Activated CD4-positive, alpha-beta T cell treated with anti-CD3 and anti-CD28 coated beads for 36 hours (primary cell): ENCODE measurements at regions of chr4 and their contacts with region 1.

Region 1: GRCh38 chr4:39032218-39033085 is at the start of gene TMEM156:
- DNase-seq: peak; percentile 68
- ATAC-seq: peak; percentile 87
- H3K4me3 Mint-ChIP-seq: peak within 1 kb of the TSS; percentile 77
- H3K27ac Mint-ChIP-seq: peak within 1 kb of the TSS; percentile 88
- H3K4me1 Mint-ChIP-seq: peaks cover 46% of the 10 kb centered on the region
- H3K27me3 Mint-ChIP-seq: no peaks in the 10 kb centered on the region
- total RNA-seq, gene TMEM156: 14.3 to 15.4 TPM

Region 2: GRCh38 chr4:38160487-38161207 is 871.8 kb before region 1 on chr4:
- CTCF ChIA-PET with region 1: no interaction called
- POLR2A ChIA-PET with region 1: no interaction called
- intact Hi-C with region 1: loop called in 1 of 2 experiments (anchors 10 kb)
- DNase-seq: peak; percentile 69
- ATAC-seq: peak; percentile 79
- H3K4me3 Mint-ChIP-seq: no peak overlapping the region
- H3K27ac Mint-ChIP-seq: peak overlapping the region; percentile 73
- H3K4me1 Mint-ChIP-seq: peaks cover 70% of the 10 kb centered on the region
- H3K27me3 Mint-ChIP-seq: no peaks in the 10 kb centered on the region

Region 3: GRCh38 chr4:38889143-38889542 is 143.3 kb before region 1 on chr4:
- CTCF ChIA-PET with region 1: no interaction called
- POLR2A ChIA-PET with region 1: no interaction called
- intact Hi-C with region 1: loop called (anchors 1 kb)
- DNase-seq: no peak
- ATAC-seq: peak; percentile 78
- H3K4me3 Mint-ChIP-seq: peak overlapping the region; percentile 52
- H3K27ac Mint-ChIP-seq: peak overlapping the region; percentile 88
- H3K4me1 Mint-ChIP-seq: peaks cover 18% of the 10 kb centered on the region
- H3K27me3 Mint-ChIP-seq: no peaks in the 10 kb centered on the region

Region 4: GRCh38 chr4:38939165-38939564 is 93.3 kb before region 1 on chr4:
- CTCF ChIA-PET with region 1: interaction called, 3 read pairs
- POLR2A ChIA-PET with region 1: no interaction called
- intact Hi-C with region 1: loop called (anchors 1 to 5 kb)
- DNase-seq: no peak
- ATAC-seq: peak; percentile 94
- H3K4me3 Mint-ChIP-seq: no peak overlapping the region
- H3K27ac Mint-ChIP-seq: peak overlapping the region; percentile 47
- H3K4me1 Mint-ChIP-seq: peaks cover 42% of the 10 kb centered on the region
- H3K27me3 Mint-ChIP-seq: no peaks in the 10 kb centered on the region

Region 5: GRCh38 chr4:38980903-38981676 is 51.4 kb before region 1 on chr4:
- CTCF ChIA-PET with region 1: no interaction called
- POLR2A ChIA-PET with region 1: interaction called, 3 read pairs
- intact Hi-C with region 1: loop called (anchors 1 kb)
- DNase-seq: peak; percentile 30
- ATAC-seq: peak; percentile 81
- H3K4me3 Mint-ChIP-seq: peak overlapping the region; percentile 23
- H3K27ac Mint-ChIP-seq: peak overlapping the region; percentile 84
- H3K4me1 Mint-ChIP-seq: peaks cover 62% of the 10 kb centered on the region
- H3K27me3 Mint-ChIP-seq: no peaks in the 10 kb centered on the region

Region 6: DNA sequence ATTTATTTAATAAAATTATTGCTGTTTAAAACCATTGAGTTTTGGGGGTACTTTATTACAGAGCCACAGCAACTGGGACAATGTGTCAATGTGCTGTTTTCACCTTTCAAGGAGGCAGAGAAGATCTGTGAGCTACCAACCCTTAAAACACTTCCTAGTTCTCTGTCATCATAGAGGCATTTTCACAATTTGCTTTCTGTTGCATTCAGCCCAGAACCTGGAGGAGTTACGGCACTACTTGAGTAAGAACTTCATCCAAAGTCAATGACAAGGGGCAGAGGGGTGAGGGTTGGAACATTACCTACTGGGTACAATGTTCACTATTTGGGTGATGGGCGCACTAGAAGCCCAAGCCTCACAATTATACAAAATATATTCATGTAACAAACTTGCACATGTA is 35.4 kb before region 1 on chr4:
- CTCF ChIA-PET with region 1: no interaction called
- POLR2A ChIA-PET with region 1: no interaction called
- intact Hi-C with region 1: no loop called
- DNase-seq: no peak
- ATAC-seq: no peak
- H3K4me3 Mint-ChIP-seq: no peak overlapping the region
- H3K27ac Mint-ChIP-seq: no peak overlapping the region
- H3K4me1 Mint-ChIP-seq: no peaks in the 10 kb centered on the region
- H3K27me3 Mint-ChIP-seq: no peaks in the 10 kb centered on the region